ENCODE measurements at regions of chr17 and their contacts with region 1.

Region 1: DNA sequence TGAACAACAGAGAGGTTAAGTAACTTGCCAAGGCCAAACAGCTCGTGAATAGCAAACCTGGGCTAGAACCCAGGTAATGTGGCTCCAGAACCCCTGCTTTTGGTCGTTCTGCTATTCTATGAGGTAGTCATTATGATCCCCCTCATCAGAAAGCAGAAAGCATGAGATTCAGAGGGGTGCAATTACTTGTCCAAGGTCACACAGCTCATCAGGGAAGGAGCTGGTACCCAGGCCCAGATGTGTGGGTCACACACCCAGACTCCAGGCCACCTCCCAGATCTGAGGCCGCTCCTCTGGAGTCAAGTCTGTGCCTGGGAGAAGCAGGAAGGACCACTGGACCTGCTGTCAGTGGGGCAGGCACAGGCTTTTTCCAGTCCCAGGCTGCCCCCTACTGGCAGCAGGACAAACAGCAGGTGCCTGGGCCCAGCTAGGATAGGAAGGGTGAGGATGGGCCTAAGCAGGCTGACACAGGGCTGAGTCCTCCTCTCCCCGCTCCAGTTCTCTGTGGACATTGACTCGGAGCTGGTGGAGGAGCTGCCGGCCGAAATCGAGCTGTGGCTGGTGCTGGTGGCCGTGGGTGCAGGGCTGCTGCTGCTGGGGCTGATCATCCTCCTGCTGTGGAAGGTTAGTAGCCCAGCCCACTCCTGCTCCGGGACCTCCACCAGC is 7.8 kb upstream of the PDK2 start:
- DNase-seq: peak; percentile 57
- ATAC-seq: peak; percentile 93
- H3K4me3 ChIP-seq: no peak overlapping the region
- H3K27ac ChIP-seq: no peak overlapping the region; the same call in 1 of the 2 replicates
- H3K4me1 ChIP-seq: peaks cover 0 to 4% of the 10 kb centered on the region in 2 experiments; a peak in 2 of 4 replicates
- H3K27me3 ChIP-seq: no peaks in the 10 kb centered on the region
- CTCF ChIP-seq: peak; percentile 92 to 100 (median 99)
- POLR2A ChIP-seq: no peak
- RAD21 ChIP-seq: peak; percentile 98

Region 2: GRCh38 chr17:49861150-49861892 is 226.1 kb before region 1 on chr17:
- CTCF ChIA-PET with region 1: no interaction called
- POLR2A ChIA-PET with region 1: no interaction called
- RAD21 ChIA-PET with region 1: no interaction called
- intact Hi-C with region 1: loop called (anchors 5 kb)
- DNase-seq: no peak
- ATAC-seq: peak; percentile 78
- H3K4me3 ChIP-seq: no peak overlapping the region
- H3K27ac ChIP-seq: no peak overlapping the region
- H3K4me1 ChIP-seq: peaks cover 0 to 12% of the 10 kb centered on the region in 2 experiments; a peak in 3 of 4 replicates
- H3K27me3 ChIP-seq: no peaks in the 10 kb centered on the region
- CTCF ChIP-seq: peak; percentile 90 to 100 (median 98)
- POLR2A ChIP-seq: no peak
- RAD21 ChIP-seq: peak; percentile 100

Region 3: DNA sequence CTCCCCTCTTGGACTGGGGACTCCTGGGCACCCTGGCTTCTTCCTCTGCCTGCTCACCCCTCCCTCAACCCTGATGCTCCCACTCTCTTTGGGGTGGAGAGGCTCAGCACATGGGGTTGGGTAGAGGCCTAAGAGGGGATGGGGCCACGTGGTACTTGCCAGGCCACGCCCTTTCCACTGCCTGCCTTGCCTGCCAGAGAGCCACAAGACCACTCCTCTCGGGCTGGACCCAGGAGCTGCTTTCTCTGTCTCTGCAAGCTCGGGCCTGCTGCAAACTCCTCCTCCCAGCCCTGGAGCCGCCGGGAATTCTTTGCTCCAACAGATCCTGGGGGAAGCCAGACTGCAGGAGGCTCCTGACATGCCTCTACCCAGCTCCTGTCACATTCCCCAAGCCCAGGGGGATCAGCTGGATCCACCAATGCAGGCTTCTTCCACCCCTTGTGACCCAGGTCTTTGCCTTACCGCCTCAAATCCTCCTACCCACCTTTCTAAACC is 106.6 kb before region 1 on chr17:
- CTCF ChIA-PET with region 1: no interaction called
- POLR2A ChIA-PET with region 1: no interaction called
- RAD21 ChIA-PET with region 1: no interaction called
- intact Hi-C with region 1: no loop called
- DNase-seq: no peak
- ATAC-seq: no peak
- H3K4me3 ChIP-seq: no peak overlapping the region
- H3K27ac ChIP-seq: no peak overlapping the region
- H3K4me1 ChIP-seq: peaks cover 6 to 14% of the 10 kb centered on the region in 2 experiments; a peak in 3 of 4 replicates
- H3K27me3 ChIP-seq: no peaks in the 10 kb centered on the region
- CTCF ChIP-seq: no peak
- POLR2A ChIP-seq: no peak
- RAD21 ChIP-seq: no peak

Region 4: GRCh38 chr17:50026901-50027630 is 60.3 kb before region 1 on chr17:
- CTCF ChIA-PET with region 1: interaction called, 42 read pairs
- POLR2A ChIA-PET with region 1: interaction called, 4 read pairs
- RAD21 ChIA-PET with region 1: interaction called, 3 to 8 read pairs
- intact Hi-C with region 1: loop called (anchors 1 kb)
- DNase-seq: peak; percentile 77
- ATAC-seq: peak; percentile 62
- H3K4me3 ChIP-seq: peak overlapping the region; percentile 52 to 55
- H3K27ac ChIP-seq: peak overlapping the region; percentile 93
- H3K4me1 ChIP-seq: peaks cover 28 to 44% of the 10 kb centered on the region in 2 experiments
- H3K27me3 ChIP-seq: no peaks in the 10 kb centered on the region
- CTCF ChIP-seq: peak; percentile 94 to 99 (median 98)
- POLR2A ChIP-seq: no peak
- RAD21 ChIP-seq: peak; percentile 97